B cell (primary cell): ENCODE measurements at regions of chr3 and their contacts with region 1.

Region 1: DNA sequence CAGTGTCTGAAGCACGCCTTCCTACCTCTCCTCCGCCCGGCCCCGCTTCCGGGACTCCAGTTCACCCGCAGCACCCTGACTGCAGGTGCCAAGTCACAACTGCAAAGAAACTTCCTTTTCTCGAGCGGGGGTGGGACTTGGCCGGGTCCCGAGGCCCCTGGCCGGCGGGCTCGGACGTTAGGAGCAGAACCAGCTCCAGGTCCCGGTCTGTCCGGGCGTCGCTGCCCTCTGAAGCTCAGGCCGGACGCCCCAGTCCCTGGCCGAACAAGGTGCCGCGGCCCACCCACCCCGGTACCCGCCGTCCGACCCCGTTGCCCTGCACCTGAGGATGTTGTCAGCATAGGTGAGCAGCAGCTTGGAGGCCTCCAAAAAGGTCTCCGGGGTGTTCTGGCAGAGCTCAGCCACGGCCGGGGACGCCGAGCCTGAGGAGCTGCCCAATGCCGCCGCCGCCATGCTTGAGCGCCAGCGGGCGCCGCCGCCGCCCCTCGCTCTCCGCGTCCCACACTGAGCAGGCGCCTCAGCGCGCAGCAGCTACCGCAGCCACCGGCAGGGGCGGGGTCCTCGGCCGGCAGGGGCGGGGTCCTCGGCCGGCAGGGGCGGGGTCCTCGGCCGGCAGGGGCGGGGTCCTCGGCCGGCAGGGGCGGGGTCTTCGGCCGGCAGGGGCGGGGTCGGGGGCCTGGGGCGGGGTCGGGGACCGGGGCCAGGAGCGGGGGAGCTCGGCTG is at the start of gene NGLY1:
- DNase-seq: peak; percentile 90
- ATAC-seq: peak; percentile 82
- H3K4me3 ChIP-seq: peak within 1 kb of the TSS; percentile 81 to 95 (median 86)
- H3K4me3 Mint-ChIP-seq: peak within 1 kb of the TSS; percentile 92
- H3K27ac ChIP-seq: peak within 1 kb of the TSS; percentile 94 to 97
- H3K27ac Mint-ChIP-seq: peak within 1 kb of the TSS; percentile 98
- H3K4me1 ChIP-seq: peaks cover 27 to 32% of the 10 kb centered on the region in 2 donors
- H3K4me1 Mint-ChIP-seq: peaks cover 48% of the 10 kb centered on the region
- H3K27me3 ChIP-seq: no peaks in the 10 kb centered on the region
- H3K27me3 Mint-ChIP-seq: no peaks in the 10 kb centered on the region
- CTCF ChIP-seq: no peak
- total RNA-seq, gene NGLY1: 144 and 145 TPM in 2 replicates

Region 2: GRCh38 chr3:25768851-25769250 is 14.2 kb before region 1 on chr3:
- CTCF ChIA-PET with region 1: interaction called, 3 read pairs
- POLR2A ChIA-PET with region 1: interaction called, 5 read pairs
- intact Hi-C with region 1: loop called (anchors 1 kb)
- DNase-seq: peak; percentile 69
- ATAC-seq: peak; percentile 88
- H3K4me3 ChIP-seq: peak overlapping the region in 3 of 5 experiments; percentile 6 to 42 (median 15)
- H3K4me3 Mint-ChIP-seq: peak overlapping the region; percentile 76
- H3K27ac ChIP-seq: peak overlapping the region; percentile 60 to 71
- H3K27ac Mint-ChIP-seq: peak overlapping the region; percentile 88
- H3K4me1 ChIP-seq: peaks cover 15 to 18% of the 10 kb centered on the region in 2 donors
- H3K4me1 Mint-ChIP-seq: peaks cover 45% of the 10 kb centered on the region
- H3K27me3 ChIP-seq: no peaks in the 10 kb centered on the region
- H3K27me3 Mint-ChIP-seq: no peaks in the 10 kb centered on the region
- CTCF ChIP-seq: no peak

Region 3: GRCh38 chr3:25834346-25834745 is 51.2 kb after region 1 on chr3:
- CTCF ChIA-PET with region 1: no interaction called
- POLR2A ChIA-PET with region 1: no interaction called
- intact Hi-C with region 1: no loop called
- DNase-seq: no peak
- ATAC-seq: no peak
- H3K4me3 ChIP-seq: no peak overlapping the region
- H3K4me3 Mint-ChIP-seq: no peak overlapping the region
- H3K27ac ChIP-seq: no peak overlapping the region
- H3K27ac Mint-ChIP-seq: no peak overlapping the region
- H3K4me1 ChIP-seq: no peaks in the 10 kb centered on the region
- H3K4me1 Mint-ChIP-seq: peaks cover 6% of the 10 kb centered on the region
- H3K27me3 ChIP-seq: no peaks in the 10 kb centered on the region
- H3K27me3 Mint-ChIP-seq: peaks cover 7% of the 10 kb centered on the region
- CTCF ChIP-seq: no peak